ENCODE measurements at regions of chr1 and their contacts with region 1.

Region 1: DNA sequence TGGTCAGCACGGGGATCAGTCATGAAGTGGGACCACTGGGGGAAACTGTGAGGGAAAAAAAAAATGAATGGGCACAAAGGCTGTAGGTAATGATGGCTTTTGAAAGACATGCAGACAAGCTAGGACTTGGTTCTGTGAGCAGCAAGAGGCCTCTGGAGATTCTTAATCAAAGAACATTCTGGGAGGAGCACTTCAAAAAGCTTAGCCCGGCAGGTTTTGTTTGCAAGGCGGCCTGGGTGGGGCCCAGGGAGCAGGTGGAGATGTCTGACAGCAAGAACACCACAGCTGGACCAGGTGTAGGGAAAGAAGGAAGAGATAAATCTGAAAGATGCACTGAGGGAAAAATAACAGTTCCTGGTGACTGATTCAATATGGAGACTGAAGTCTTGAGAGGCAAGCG is 6.0 kb downstream of the TEX35 start:
- DNase-seq: no peak
- ATAC-seq: no peak
- H3K4me3 ChIP-seq: no peak overlapping the region
- H3K27ac ChIP-seq: no peak overlapping the region
- H3K4me1 ChIP-seq: no peaks in the 10 kb centered on the region
- H3K27me3 ChIP-seq: no peaks in the 10 kb centered on the region
- CTCF ChIP-seq: no peak

Region 2: DNA sequence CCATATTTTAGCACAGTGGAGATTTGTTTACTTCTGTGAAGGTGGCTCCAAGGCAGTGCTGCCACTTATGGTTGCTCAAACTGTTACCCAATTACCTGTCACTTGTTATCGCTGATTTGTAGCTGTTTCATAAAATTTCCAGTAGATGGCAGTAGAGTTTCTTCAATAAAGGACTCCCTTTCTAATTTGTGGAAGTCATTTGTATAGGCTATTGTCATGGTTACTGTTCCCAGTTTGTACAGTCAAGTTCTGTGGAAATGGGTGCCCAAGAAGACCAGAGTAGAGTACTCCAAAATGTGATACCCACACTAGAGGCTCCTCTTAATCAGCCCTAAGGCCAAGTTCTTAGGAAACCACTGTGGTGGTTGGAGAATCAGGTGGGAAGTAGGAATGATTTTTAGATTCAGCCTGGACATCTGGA is 208.2 kb before region 1 on chr1:
- CTCF ChIA-PET with region 1: no interaction called
- POLR2A ChIA-PET with region 1: no interaction called
- in situ Hi-C with region 1: no loop called
- intact Hi-C with region 1: loop called (anchors 5 kb)
- DNase-seq: no peak
- ATAC-seq: peak; percentile 85
- H3K4me3 ChIP-seq: no peak overlapping the region
- H3K27ac ChIP-seq: no peak overlapping the region
- H3K4me1 ChIP-seq: peaks cover 12% of the 10 kb centered on the region
- H3K27me3 ChIP-seq: no peaks in the 10 kb centered on the region
- CTCF ChIP-seq: peak; percentile 73